B cell (primary cell): ENCODE measurements at regions of chr3 and their contacts with region 1.

Region 1: DNA sequence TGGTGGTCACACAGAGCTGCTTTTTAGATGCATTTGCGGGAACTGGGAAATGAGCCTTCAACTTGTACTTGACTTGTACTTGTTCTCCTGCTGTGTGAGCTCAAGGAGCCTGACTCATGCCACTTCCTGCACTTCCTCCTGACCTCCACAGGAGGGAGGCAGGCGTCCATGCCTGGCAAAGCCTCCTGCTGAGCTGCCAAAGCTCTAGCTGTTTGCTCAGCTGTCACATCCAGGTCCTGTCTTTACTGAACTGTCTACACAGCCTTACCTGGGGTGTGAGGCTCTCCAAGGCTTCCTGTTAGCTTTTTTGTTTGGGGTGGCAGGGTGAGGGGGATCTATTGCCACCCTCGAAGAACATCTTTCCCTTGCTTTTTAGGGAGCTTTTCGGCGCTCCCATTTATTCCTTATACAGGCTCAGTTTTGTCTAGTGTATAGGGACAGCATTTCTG is 6.4 kb downstream of the THPO start:
- DNase-seq: peak; percentile 68
- ATAC-seq: peak; percentile 82
- H3K4me3 ChIP-seq: no peak overlapping the region
- H3K4me3 Mint-ChIP-seq: no peak overlapping the region
- H3K27ac ChIP-seq: no peak overlapping the region
- H3K27ac Mint-ChIP-seq: no peak overlapping the region
- H3K4me1 ChIP-seq: no peaks in the 10 kb centered on the region
- H3K4me1 Mint-ChIP-seq: peaks cover 2% of the 10 kb centered on the region
- H3K27me3 ChIP-seq: peaks cover 0 to 12% (median 0%) of the 10 kb centered on the region in 4 experiments
- H3K27me3 Mint-ChIP-seq: peaks cover 15% of the 10 kb centered on the region
- CTCF ChIP-seq: peak; percentile 72

Region 2: DNA sequence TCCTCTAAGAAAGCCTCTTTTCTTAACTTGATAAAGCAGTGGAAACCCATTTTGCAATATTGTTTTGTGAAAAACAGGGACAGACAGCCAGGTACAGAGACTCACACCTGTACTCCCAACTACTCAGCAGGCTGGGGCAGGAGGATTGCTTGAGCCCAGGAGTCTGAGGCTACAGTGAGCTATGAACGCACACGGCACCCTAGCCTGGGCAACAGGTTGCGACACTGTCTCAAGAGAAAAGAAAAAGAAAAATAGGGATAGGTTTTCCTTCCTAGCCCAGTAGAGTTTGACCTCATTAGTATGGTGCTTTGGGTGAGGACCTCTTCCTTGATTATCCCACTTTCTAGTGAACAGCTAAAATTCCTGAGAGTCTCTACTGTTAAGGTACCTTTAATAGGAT is 691.5 kb before region 1 on chr3:
- CTCF ChIA-PET with region 1: no interaction called
- POLR2A ChIA-PET with region 1: no interaction called
- intact Hi-C with region 1: no loop called
- DNase-seq: no peak
- ATAC-seq: no peak
- H3K4me3 ChIP-seq: no peak overlapping the region
- H3K4me3 Mint-ChIP-seq: no peak overlapping the region
- H3K27ac ChIP-seq: no peak overlapping the region
- H3K27ac Mint-ChIP-seq: no peak overlapping the region
- H3K4me1 ChIP-seq: no peaks in the 10 kb centered on the region
- H3K4me1 Mint-ChIP-seq: no peaks in the 10 kb centered on the region
- H3K27me3 ChIP-seq: no peaks in the 10 kb centered on the region
- H3K27me3 Mint-ChIP-seq: no peaks in the 10 kb centered on the region
- CTCF ChIP-seq: no peak

Region 3: GRCh38 chr3:184354121-184354728 is 17.4 kb before region 1 on chr3:
- CTCF ChIA-PET with region 1: interaction called, 10 read pairs
- POLR2A ChIA-PET with region 1: no interaction called
- intact Hi-C with region 1: no loop called
- DNase-seq: peak; percentile 74
- ATAC-seq: peak; percentile 79
- H3K4me3 ChIP-seq: no peak overlapping the region
- H3K4me3 Mint-ChIP-seq: no peak overlapping the region
- H3K27ac ChIP-seq: no peak overlapping the region
- H3K27ac Mint-ChIP-seq: no peak overlapping the region
- H3K4me1 ChIP-seq: peaks cover 0 to 8% of the 10 kb centered on the region in 2 donors
- H3K4me1 Mint-ChIP-seq: no peaks in the 10 kb centered on the region
- H3K27me3 ChIP-seq: no peaks in the 10 kb centered on the region
- H3K27me3 Mint-ChIP-seq: no peaks in the 10 kb centered on the region
- CTCF ChIP-seq: peak; percentile 73